HAP-1 (cell line): ENCODE measurements at regions of chr10 and their contacts with region 1.

Region 1: GRCh38 chr10:87659571-87660483 is at the start of gene PAPSS2:
- DNase-seq: peak; percentile 52 to 70
- H3K4me3 ChIP-seq: peak within 1 kb of the TSS; percentile 64
- H3K4me1 ChIP-seq: peaks cover 20% of the 10 kb centered on the region
- H3K27me3 ChIP-seq: no peaks in the 10 kb centered on the region

Region 2: GRCh38 chr10:89369156-89370105 is 1709.6 kb after region 1 on chr10:
- in situ Hi-C with region 1: loop called (anchors 25 kb)
- DNase-seq: peak; percentile 32 to 41
- H3K4me3 ChIP-seq: no peak overlapping the region
- H3K4me1 ChIP-seq: peaks cover 21% of the 10 kb centered on the region
- H3K27me3 ChIP-seq: no peaks in the 10 kb centered on the region